Gastrocnemius medialis (tissue), 4 donors: ENCODE measurements at regions of chr14 and their contacts with region 1.

Region 1: GRCh38 chr14:36941783-36942521 is 230.5 kb downstream of the SLC25A21 start:
- DNase-seq: peak; percentile 9 to 35
- ATAC-seq: peak in 1 of 2 donors; percentile 75
- H3K4me3 ChIP-seq: peak overlapping the region in 1 of 4 donors; percentile 18
- H3K27ac ChIP-seq: no peak overlapping the region
- H3K4me1 ChIP-seq: no peaks in the 10 kb centered on the region
- H3K27me3 ChIP-seq: no peaks in the 10 kb centered on the region
- CTCF ChIP-seq: peak; percentile 73 to 92 (median 77)
- POLR2A ChIP-seq: no peak

Region 2: GRCh38 chr14:36553656-36554260 is 388.2 kb before region 1 on chr14:
- in situ Hi-C with region 1: loop called in 1 of 4 experiments (anchors 25 kb)
- intact Hi-C with region 1: loop called (anchors 2 kb)
- DNase-seq: no peak
- ATAC-seq: peak in 1 of 2 donors; percentile 56
- H3K4me3 ChIP-seq: no peak overlapping the region
- H3K27ac ChIP-seq: no peak overlapping the region
- H3K4me1 ChIP-seq: no peaks in the 10 kb centered on the region
- H3K27me3 ChIP-seq: no peaks in the 10 kb centered on the region
- CTCF ChIP-seq: peak in 3 of 5 experiments; percentile 29 to 64 (median 48)
- POLR2A ChIP-seq: no peak

Region 3: DNA sequence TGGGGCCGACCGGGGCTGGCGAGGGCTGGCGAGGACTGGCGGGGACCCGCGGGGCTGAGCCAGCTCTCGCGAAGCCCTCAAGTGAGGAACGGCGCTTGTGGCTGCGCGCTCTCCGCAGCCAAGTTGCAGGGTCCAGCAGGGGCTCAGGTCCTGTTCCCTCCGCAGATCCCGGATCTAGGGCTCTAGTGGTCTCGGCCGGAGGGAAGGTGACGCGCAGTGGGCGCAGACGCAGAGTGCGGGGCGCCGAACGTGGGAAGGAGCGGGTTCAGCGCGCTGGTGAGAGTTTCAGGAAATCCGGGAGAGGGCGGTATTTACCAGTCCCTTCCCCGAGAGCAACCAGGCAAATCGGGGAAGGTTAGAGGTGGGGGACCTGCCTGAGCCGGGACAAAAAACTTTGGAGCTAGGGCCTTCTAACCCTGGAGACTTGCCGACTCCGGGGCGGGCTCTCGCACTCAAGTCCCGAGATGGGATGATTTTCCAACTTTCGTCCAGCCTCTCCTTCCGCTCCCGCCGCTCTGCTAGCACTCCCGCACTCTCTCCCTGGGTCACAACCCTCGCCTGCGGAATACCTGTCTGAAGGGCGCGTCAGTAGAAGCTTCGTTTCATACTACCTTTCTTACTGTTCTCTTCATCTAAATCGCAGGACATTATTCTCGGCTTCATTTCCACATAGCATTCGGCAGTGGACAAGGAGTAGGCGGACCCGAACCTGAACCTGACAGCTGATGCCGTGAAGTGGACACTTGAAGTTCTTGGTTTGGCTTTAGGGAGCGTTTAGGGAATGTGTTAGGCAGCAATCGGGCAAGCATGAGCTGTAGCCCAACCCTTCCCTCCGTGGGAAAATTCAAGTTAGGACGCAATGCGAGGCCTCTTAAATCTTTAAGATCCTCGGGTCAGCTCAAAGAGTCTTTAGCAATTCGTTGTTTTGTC is 293.9 kb before region 1 on chr14:
- in situ Hi-C with region 1: loop called in 2 of 4 experiments (anchors 25 kb)
- intact Hi-C with region 1: loop called (anchors 5 kb)
- DNase-seq: no peak
- ATAC-seq: no peak
- H3K4me3 ChIP-seq: peak overlapping the region; percentile 31 to 51 (median 40)
- H3K27ac ChIP-seq: no peak overlapping the region
- H3K4me1 ChIP-seq: peaks cover 12% of the 10 kb centered on the region in 2 donors
- H3K27me3 ChIP-seq: peaks cover 75 to 90% (median 77%) of the 10 kb centered on the region in 3 donors
- CTCF ChIP-seq: peak in 4 of 5 experiments; percentile 8 to 35 (median 24)
- POLR2A ChIP-seq: no peak

Region 4: DNA sequence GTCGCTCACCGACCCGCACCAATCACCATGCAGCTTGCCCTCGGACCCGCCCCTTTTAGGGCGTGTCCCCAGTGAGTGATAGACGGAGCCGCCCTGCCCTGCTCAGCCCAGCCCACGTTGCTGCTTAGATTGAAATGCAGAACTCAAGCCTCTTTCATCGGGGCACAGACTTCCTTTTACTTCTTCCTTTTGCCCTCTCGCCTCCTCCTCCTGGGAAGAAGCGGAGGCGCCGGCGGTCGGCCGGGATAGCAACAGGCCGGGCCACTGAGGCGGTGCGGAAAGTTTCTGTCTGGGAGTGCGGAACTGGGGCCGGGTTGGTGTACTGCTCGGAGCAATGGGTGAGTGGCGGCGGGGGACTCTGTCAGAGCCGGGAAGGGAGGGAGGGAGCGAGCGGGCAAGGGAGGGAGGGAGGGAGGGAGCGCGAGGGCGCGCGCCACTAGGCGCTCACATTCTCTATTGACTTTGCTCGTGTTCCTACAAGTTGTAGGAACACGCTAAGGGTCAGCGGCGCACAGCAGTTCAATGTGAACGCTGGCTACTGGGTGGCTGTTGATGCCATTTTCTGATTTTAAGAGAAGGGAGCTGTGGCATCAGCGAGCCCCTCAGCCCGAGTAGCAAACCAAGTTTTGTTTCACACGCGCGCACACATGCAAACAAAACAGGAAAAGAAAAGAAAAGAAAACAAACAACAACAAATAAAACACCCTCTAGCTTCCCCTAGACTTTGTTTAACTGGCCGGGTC is 280.0 kb before region 1 on chr14 and contains the start of gene PAX9:
- in situ Hi-C with region 1: loop called in 1 of 4 experiments (anchors 25 kb)
- intact Hi-C with region 1: no loop called
- DNase-seq: peak; percentile 48 to 63
- ATAC-seq: peak; percentile 90 to 92
- H3K4me3 ChIP-seq: peak within 1 kb of the TSS; percentile 27 to 51 (median 44)
- H3K27ac ChIP-seq: no peak within 1 kb of the TSS
- H3K4me1 ChIP-seq: peaks cover 25 to 47% of the 10 kb centered on the region in 2 donors
- H3K27me3 ChIP-seq: peaks cover 96 to 100% (median 100%) of the 10 kb centered on the region in 3 donors
- CTCF ChIP-seq: no peak
- POLR2A ChIP-seq: no peak
- total RNA-seq, gene PAX9: not detected